MCF 10A (cell line): ENCODE measurements at regions of chr4 and their contacts with region 1.

Region 1: GRCh38 chr4:157674699-157675098 is 454.2 kb downstream of the GRIA2 start:
- DNase-seq: no peak
- H3K4me3 Mint-ChIP-seq: no peak overlapping the region
- H3K27ac Mint-ChIP-seq: no peak overlapping the region
- H3K4me1 Mint-ChIP-seq: no peaks in the 10 kb centered on the region
- H3K27me3 Mint-ChIP-seq: no peaks in the 10 kb centered on the region
- CTCF ChIP-seq: no peak

Region 2: GRCh38 chr4:157689476-157689875 is 14.8 kb after region 1 on chr4:
- CTCF ChIA-PET with region 1: no interaction called
- POLR2A ChIA-PET with region 1: no interaction called
- intact Hi-C with region 1: no loop called
- DNase-seq: no peak
- H3K4me3 Mint-ChIP-seq: no peak overlapping the region
- H3K27ac Mint-ChIP-seq: no peak overlapping the region
- H3K4me1 Mint-ChIP-seq: no peaks in the 10 kb centered on the region
- H3K27me3 Mint-ChIP-seq: no peaks in the 10 kb centered on the region
- CTCF ChIP-seq: no peak

Region 3: GRCh38 chr4:158146736-158147135 is 472.0 kb after region 1 on chr4:
- CTCF ChIA-PET with region 1: no interaction called
- POLR2A ChIA-PET with region 1: no interaction called
- intact Hi-C with region 1: loop called (anchors 10 kb)
- DNase-seq: no peak
- H3K4me3 Mint-ChIP-seq: no peak overlapping the region
- H3K27ac Mint-ChIP-seq: no peak overlapping the region
- H3K4me1 Mint-ChIP-seq: no peaks in the 10 kb centered on the region
- H3K27me3 Mint-ChIP-seq: no peaks in the 10 kb centered on the region
- CTCF ChIP-seq: no peak